HCT116 (cell line): ENCODE measurements at regions of chr17 and their contacts with region 1.

Region 1: DNA sequence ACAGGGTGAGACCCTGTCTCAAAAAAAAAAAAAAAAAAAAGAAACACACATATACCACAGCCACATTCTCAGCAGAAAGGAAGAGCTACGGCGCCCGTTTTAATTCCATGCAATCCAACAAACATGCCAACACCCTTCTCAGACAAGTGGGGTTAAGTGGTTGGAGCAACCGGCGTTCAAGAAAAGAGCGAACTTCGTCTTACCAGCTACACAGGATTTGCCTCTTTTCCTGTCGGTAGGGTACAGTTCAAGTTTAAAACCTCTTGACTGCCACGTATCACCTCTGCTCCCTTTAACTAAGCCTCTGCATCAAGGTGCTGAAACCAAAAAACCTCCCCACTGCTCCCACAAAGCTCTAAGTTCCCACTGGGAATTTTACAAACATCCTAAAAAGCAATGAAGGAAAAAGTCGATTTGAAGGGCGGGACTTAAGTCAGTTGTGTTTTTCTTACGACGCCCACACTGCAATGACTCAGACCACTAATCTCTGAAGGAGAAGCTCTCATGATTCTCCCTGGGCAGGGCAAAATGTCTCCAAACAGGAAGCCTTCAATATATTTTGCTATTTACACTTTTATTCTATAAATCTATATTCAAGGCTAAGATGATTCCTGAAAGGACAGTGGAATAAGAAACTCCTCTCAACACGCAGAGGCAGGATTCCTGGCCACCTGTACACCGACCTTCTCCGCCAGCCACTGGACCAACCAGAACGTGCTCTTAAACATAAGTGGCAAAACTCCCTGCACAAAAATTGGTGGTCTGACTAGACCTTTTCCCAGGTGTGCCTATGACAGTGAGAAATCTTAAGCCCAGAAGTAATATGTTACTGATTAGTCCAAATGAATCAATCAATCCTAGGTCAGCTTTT is 18.8 kb downstream of the SRP68 start:
- DNase-seq: peak; percentile 80
- ATAC-seq: peak; percentile 82
- H3K4me3 ChIP-seq: peak overlapping the region; percentile 0 to 13; a peak in 2 of 4 replicates
- H3K27ac ChIP-seq: peak overlapping the region; percentile 79
- H3K4me1 ChIP-seq: peaks cover 40% of the 10 kb centered on the region in 2 experiments
- H3K27me3 ChIP-seq: no peaks in the 10 kb centered on the region
- CTCF ChIP-seq: no peak
- POLR2A ChIP-seq: no peak
- RAD21 ChIP-seq: no peak; the same call in 1 of the 2 replicates

Region 2: GRCh38 chr17:76072148-76072858 is 18.8 kb after region 1 on chr17 and contains the start of gene SRP68:
- CTCF ChIA-PET with region 1: interaction called, 3 read pairs
- POLR2A ChIA-PET with region 1: no interaction called
- RAD21 ChIA-PET with region 1: no interaction called
- intact Hi-C with region 1: loop called (anchors 1 kb)
- DNase-seq: peak; percentile 87
- ATAC-seq: peak; percentile 100
- H3K4me3 ChIP-seq: peak within 1 kb of the TSS; percentile 63 to 78
- H3K27ac ChIP-seq: peak within 1 kb of the TSS; percentile 60
- H3K4me1 ChIP-seq: peaks cover 11 to 22% of the 10 kb centered on the region in 2 experiments
- H3K27me3 ChIP-seq: no peaks in the 10 kb centered on the region
- CTCF ChIP-seq: no peak
- POLR2A ChIP-seq: peak; percentile 87
- RAD21 ChIP-seq: no peak
- total RNA-seq, gene SRP68: 152 TPM

Region 3: DNA sequence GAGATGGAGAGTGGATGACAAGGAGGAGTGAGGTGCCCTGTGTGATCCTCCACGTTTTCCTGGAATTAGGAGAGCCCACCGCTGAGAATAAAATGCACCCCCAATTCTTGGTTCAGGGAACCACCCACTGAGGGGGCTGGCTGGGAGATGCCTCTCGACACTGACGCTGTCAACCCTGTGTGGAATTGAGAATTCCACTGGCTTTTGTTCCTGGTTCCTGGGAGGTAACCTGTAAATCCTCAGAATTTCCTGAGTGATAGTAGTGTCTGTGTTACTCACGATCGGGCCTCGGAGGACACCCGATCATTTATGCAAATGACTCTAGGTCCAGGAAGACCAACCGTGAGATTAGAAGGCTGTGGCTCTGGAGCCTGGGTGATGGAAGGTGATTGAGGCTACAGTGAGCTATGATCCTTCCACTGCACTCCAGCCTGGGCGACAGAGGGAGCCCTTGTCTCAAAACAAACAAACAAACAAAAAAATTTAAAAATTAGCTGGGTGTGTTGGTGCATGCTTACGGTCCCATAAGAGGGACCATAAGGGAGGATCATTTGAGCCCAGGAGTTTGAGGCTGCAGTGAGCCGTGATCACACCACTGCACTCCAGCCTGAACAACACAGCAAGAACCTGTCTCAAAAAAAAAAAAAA is 311.9 kb after region 1 on chr17:
- CTCF ChIA-PET with region 1: no interaction called
- POLR2A ChIA-PET with region 1: no interaction called
- RAD21 ChIA-PET with region 1: no interaction called
- intact Hi-C with region 1: no loop called
- DNase-seq: peak; percentile 57
- ATAC-seq: peak; percentile 93
- H3K4me3 ChIP-seq: no peak overlapping the region; a peak in 1 of 4 replicates
- H3K27ac ChIP-seq: no peak overlapping the region
- H3K4me1 ChIP-seq: peaks cover 10 to 16% of the 10 kb centered on the region in 2 experiments; a peak in 3 of 4 replicates
- H3K27me3 ChIP-seq: no peaks in the 10 kb centered on the region
- CTCF ChIP-seq: peak; percentile 80 to 81 (median 80)
- POLR2A ChIP-seq: no peak
- RAD21 ChIP-seq: peak; percentile 73